ENCODE measurements at regions of chr2 and their contacts with region 1.

Region 1: DNA sequence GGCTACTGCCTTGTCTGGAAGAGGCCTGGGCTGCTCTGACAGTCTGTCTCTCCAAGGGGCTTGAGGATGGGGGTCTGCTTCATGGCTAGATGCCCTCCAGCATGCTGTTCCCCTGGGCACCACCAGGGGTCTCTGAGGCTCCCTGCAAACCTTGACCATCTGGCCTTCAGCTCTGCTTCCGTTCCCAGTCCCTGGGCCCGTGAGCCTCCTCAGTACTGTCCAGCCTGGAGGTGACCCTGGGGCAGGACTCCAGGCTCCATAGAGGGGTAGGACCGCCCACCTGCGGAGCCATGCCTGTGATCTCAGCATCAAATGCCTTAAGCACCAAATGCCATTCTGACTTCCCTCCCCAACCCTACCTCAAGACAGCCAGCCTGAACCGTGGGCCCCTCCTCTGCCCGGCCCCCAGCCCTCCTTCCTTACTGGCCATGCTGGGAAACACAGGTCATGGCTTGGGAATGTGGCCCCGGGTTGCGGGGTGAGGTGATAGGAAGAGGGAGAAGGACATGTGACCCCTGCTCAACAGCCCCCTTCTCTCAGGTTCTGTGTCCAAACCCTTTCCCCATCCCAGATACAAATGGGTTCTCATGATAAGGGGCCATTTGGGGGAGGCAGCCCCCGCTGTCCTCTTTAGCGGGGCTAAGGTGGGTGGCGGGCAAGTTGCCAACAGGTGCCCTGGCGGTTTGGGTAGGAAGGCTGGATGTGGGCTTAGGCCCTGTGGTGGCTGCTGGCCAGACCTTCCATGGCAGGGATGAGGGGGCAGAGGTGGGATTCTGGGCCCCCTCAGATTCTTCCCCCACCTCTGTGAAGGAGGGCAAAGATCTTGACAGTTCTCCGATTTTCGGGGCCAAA is 25.0 kb downstream of the SPEG start:
- DNase-seq: peak; percentile 85
- ATAC-seq: peak; percentile 65
- H3K4me3 Mint-ChIP-seq: peak overlapping the region; percentile 30; the same call in 1 of the 2 replicates
- H3K27ac Mint-ChIP-seq: no peak overlapping the region; the same call in 1 of the 2 replicates
- H3K4me1 Mint-ChIP-seq: peaks cover 31% of the 10 kb centered on the region
- H3K27me3 Mint-ChIP-seq: no peaks in the 10 kb centered on the region
- CTCF ChIP-seq: peak; percentile 94

Region 2: DNA sequence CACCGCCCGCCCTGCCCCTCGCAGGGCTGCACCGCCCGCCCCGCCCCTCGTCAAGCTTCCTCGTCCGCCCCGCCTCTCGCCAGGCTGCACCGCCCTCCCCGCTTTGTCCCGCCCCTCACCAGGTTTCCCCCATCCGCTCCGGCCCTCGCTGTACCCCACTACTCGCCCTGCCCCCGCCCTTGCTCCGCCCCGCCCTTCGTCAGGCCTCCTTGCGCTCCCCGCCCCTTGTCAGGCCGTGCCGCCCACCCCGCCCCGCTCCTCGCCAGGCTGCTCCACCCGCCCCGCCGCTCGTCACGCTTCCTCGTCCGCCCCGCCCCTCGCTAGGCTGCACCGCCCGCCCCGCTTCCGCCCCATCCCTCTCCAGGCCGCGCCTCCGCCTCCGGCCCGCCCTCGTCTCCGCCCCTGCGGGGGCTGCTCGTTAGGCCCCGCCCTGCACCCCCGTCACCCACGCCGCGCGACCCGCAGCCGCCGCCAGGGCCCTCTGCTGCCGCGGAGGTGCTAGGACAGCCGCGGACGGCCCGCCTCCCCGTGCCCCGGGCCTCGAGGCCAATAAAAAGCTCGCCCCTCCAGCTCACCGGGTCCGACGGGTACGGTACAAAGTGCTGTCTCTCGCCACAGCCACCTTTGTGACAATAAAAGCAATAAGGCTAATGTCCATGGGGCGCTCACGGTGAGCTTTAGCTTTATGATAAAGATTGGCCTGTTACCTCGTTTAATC is 71.4 kb before region 1 on chr2:
- CTCF ChIA-PET with region 1: interaction called, 21 read pairs
- POLR2A ChIA-PET with region 1: no interaction called
- DNase-seq: peak; percentile 97
- ATAC-seq: peak; percentile 76
- H3K4me3 Mint-ChIP-seq: peak overlapping the region; percentile 76
- H3K27ac Mint-ChIP-seq: no peak overlapping the region; the same call in 1 of the 2 replicates
- H3K4me1 Mint-ChIP-seq: peaks cover 7% of the 10 kb centered on the region
- H3K27me3 Mint-ChIP-seq: 0 out of 2 replicates have a peak, but pooled peaks cover 3% of the 10 kb centered on the region
- CTCF ChIP-seq: no peak

Region 3: DNA sequence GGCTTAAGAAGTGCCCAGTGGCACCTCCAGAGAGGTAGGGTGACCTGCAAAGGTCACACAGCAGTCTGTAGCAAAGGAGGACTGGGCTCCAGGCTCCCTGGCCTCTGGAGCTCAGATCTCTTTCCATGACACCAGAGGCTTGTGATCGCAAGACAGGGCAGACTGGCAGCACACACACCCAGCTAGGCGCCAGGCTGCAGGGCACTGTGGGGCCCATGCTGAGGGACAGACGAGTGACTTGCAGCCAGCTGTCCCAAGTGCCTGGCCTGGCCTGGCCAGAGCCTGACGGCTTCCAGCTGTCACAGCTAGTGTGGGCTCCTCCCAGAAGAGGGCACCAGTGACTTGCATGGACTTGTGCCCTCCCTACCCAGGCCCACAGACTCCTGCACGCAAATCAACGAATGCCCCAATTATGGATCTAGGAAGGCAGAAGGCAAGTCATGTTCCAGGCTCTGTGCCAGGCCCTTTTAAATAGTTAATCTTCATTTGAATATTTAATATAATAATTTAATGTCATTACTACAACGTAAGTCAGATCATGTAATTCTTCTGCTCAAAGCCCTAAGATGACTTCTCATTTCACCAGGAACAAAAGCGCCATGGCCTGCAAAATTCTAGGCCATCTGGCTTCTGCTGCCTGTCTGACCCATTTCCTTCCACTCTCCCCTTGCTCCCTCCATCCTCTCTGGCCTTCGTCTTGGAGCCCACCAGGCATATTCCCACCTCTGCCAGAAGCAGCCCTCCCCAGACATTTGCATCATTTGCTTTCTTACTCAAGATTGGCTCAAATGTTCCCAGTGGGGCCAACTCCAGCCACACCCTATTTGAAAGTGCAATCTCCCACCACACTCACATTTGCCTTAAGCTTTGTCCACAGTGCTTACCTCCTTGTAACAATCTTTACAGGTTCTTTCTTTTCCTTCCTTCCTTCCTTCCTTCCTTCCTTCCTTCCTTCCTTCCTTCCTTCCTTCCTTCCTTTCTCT is 28.8 kb before region 1 on chr2:
- CTCF ChIA-PET with region 1: interaction called, 57 read pairs
- POLR2A ChIA-PET with region 1: interaction called, 5 read pairs
- DNase-seq: no peak
- ATAC-seq: peak; percentile 36
- H3K4me3 Mint-ChIP-seq: no peak overlapping the region
- H3K27ac Mint-ChIP-seq: peak overlapping the region; percentile 69; the same call in 1 of the 2 replicates
- H3K4me1 Mint-ChIP-seq: peaks cover 8% of the 10 kb centered on the region
- H3K27me3 Mint-ChIP-seq: peaks cover 20% of the 10 kb centered on the region
- CTCF ChIP-seq: no peak

Region 4: GRCh38 chr2:219475697-219476651 is 16.3 kb after region 1 on chr2:
- CTCF ChIA-PET with region 1: interaction called, 48 read pairs
- POLR2A ChIA-PET with region 1: no interaction called
- DNase-seq: peak; percentile 86
- ATAC-seq: peak; percentile 48
- H3K4me3 Mint-ChIP-seq: peak overlapping the region; percentile 68
- H3K27ac Mint-ChIP-seq: peak overlapping the region; percentile 81; the same call in 1 of the 2 replicates
- H3K4me1 Mint-ChIP-seq: peaks cover 24% of the 10 kb centered on the region
- H3K27me3 Mint-ChIP-seq: no peaks in the 10 kb centered on the region; the same call in 1 of the 2 replicates
- CTCF ChIP-seq: peak; percentile 91

Region 5: DNA sequence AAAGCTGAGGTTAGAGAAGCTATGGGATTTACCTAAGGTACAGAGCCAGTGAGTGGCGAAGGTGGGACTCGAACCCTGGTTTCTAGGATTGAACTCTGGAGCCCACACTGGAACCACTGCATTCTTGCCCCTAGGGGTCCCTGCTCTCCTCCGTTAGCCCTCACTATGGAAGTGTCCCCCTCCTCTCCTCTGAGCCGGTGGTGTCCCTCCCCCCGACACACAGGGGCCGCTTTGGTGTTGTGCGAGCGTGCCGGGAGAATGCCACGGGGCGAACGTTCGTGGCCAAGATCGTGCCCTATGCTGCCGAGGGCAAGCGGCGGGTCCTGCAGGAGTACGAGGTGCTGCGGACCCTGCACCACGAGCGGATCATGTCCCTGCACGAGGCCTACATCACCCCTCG is 30.5 kb after region 1 on chr2:
- CTCF ChIA-PET with region 1: interaction called, 51 read pairs
- POLR2A ChIA-PET with region 1: no interaction called
- DNase-seq: peak; percentile 62
- ATAC-seq: peak; percentile 40
- H3K4me3 Mint-ChIP-seq: no peak overlapping the region
- H3K27ac Mint-ChIP-seq: no peak overlapping the region
- H3K4me1 Mint-ChIP-seq: peaks cover 39% of the 10 kb centered on the region
- H3K27me3 Mint-ChIP-seq: peaks cover 37% of the 10 kb centered on the region
- CTCF ChIP-seq: 0 out of 2 replicates have a peak, but pooled peaks have one; percentile 25

Region 6: GRCh38 chr2:219521066-219521880 is 61.6 kb after region 1 on chr2:
- CTCF ChIA-PET with region 1: interaction called, 20 read pairs
- POLR2A ChIA-PET with region 1: no interaction called
- DNase-seq: peak; percentile 80
- ATAC-seq: peak; percentile 68
- H3K4me3 Mint-ChIP-seq: peak overlapping the region; percentile 64
- H3K27ac Mint-ChIP-seq: peak overlapping the region; percentile 58
- H3K4me1 Mint-ChIP-seq: peaks cover 64% of the 10 kb centered on the region
- H3K27me3 Mint-ChIP-seq: peaks cover 32% of the 10 kb centered on the region
- CTCF ChIP-seq: peak; percentile 49; the same call in 1 of the 2 replicates